Left colon (tissue), 2 donors: ENCODE measurements at regions of chr3 and their contacts with region 1.

Region 1: GRCh38 chr3:146072824-146073223 is 88.2 kb downstream of the PLOD2 start:
- DNase-seq: no peak
- ATAC-seq: no peak

Region 2: GRCh38 chr3:145754605-145755289 is 318.1 kb before region 1 on chr3:
- intact Hi-C with region 1: no loop called
- DNase-seq: no peak
- ATAC-seq: no peak

Region 3: GRCh38 chr3:145903472-145904013 is 169.3 kb before region 1 on chr3:
- intact Hi-C with region 1: no loop called
- DNase-seq: no peak
- ATAC-seq: no peak

Region 4: GRCh38 chr3:145915795-145916194 is 157.0 kb before region 1 on chr3:
- intact Hi-C with region 1: no loop called
- DNase-seq: no peak
- ATAC-seq: no peak

Region 5: GRCh38 chr3:146160964-146161662 is 88.3 kb after region 1 on chr3 and contains the start of gene PLOD2:
- intact Hi-C with region 1: loop called in 1 of 2 experiments (anchors 10 kb)
- DNase-seq: peak; percentile 77 to 79
- ATAC-seq: peak; percentile 78
- total RNA-seq, gene PLOD2: 89.6 to 136 TPM